ENCODE measurements at regions of chr1 and their contacts with region 1.

Region 1: GRCh38 chr1:248098529-248098928 is 3.5 kb downstream of the OR2L13 start:
- DNase-seq: no peak
- ATAC-seq: no peak
- H3K4me3 ChIP-seq: no peak overlapping the region
- H3K27ac ChIP-seq: no peak overlapping the region
- H3K4me1 ChIP-seq: no peaks in the 10 kb centered on the region
- H3K27me3 ChIP-seq: no peaks in the 10 kb centered on the region
- CTCF ChIP-seq: no peak
- EP300 ChIP-seq: no peak
- POLR2A ChIP-seq: no peak
- RAD21 ChIP-seq: no peak

Region 2: DNA sequence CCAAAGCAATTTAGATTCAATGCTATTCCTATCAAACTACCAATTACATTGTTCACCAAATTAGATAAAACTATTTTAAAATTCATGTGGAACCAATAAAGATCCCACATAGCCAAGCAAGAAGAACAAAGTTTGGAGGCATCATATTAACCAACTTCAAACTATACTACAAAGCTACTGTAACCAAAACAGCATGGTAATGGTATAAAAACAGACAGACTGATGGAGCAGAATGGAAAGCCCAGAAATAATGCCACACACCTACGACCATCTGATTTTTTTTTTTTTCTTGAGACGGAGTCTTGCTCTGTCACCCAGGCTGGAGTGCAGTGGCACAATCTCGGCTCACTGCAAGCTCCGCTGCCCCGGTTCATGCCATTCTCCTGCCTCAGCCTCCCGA is 933.8 kb before region 1 on chr1:
- CTCF ChIA-PET with region 1: no interaction called
- POLR2A ChIA-PET with region 1: no interaction called
- in situ Hi-C with region 1: no loop called
- intact Hi-C with region 1: loop called (anchors 5 kb)
- DNase-seq: no peak
- ATAC-seq: no peak
- H3K4me3 ChIP-seq: no peak overlapping the region
- H3K27ac ChIP-seq: no peak overlapping the region
- H3K4me1 ChIP-seq: peaks cover 29% of the 10 kb centered on the region
- H3K27me3 ChIP-seq: no peaks in the 10 kb centered on the region; a peak in 1 of 5 replicates
- CTCF ChIP-seq: no peak
- EP300 ChIP-seq: no peak
- POLR2A ChIP-seq: no peak
- RAD21 ChIP-seq: no peak

Region 3: GRCh38 chr1:248054671-248055070 is 43.9 kb before region 1 on chr1:
- CTCF ChIA-PET with region 1: no interaction called
- POLR2A ChIA-PET with region 1: no interaction called
- in situ Hi-C with region 1: no loop called
- intact Hi-C with region 1: no loop called
- DNase-seq: no peak
- ATAC-seq: no peak
- H3K4me3 ChIP-seq: no peak overlapping the region
- H3K27ac ChIP-seq: no peak overlapping the region
- H3K4me1 ChIP-seq: no peaks in the 10 kb centered on the region
- H3K27me3 ChIP-seq: no peaks in the 10 kb centered on the region
- CTCF ChIP-seq: no peak
- EP300 ChIP-seq: no peak
- POLR2A ChIP-seq: no peak
- RAD21 ChIP-seq: no peak

Region 4: DNA sequence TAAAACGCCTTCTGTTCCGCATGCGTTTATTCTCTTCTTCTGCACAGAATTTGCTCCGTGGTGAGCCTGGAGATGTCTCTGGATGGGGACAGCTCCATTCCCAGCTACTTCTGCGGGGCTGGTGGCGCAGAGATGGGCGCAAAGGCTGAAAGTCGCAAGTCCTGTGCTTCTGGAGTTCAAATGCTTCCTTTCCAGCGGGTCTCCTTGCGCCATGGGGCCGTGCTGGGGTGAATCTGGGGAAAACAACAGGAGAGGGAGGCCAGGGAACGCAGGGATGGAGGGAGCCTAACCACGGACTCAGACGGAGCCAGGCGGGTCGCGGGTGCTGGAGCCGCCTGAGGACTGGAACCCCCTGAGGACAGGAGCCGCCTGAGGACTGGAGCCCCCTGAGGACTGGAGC is 207.6 kb after region 1 on chr1:
- CTCF ChIA-PET with region 1: no interaction called
- POLR2A ChIA-PET with region 1: no interaction called
- in situ Hi-C with region 1: no loop called
- intact Hi-C with region 1: no loop called
- DNase-seq: no peak
- ATAC-seq: no peak
- H3K4me3 ChIP-seq: no peak overlapping the region
- H3K27ac ChIP-seq: no peak overlapping the region
- H3K4me1 ChIP-seq: no peaks in the 10 kb centered on the region
- H3K27me3 ChIP-seq: no peaks in the 10 kb centered on the region
- CTCF ChIP-seq: no peak
- EP300 ChIP-seq: no peak
- POLR2A ChIP-seq: no peak
- RAD21 ChIP-seq: no peak

Measured in HepG2 (cell line).